ENCODE measurements at regions of chr16 and their contacts with region 1.

Region 1: GRCh38 chr16:24737391-24737871 is 8.0 kb downstream of the TNRC6A start:
- DNase-seq: no peak
- H3K4me3 ChIP-seq: peak overlapping the region; percentile 11; the same call in 1 of the 2 replicates
- H3K27ac ChIP-seq: no peak overlapping the region
- H3K27me3 ChIP-seq: no peaks in the 10 kb centered on the region
- CTCF ChIP-seq: no peak

Region 2: DNA sequence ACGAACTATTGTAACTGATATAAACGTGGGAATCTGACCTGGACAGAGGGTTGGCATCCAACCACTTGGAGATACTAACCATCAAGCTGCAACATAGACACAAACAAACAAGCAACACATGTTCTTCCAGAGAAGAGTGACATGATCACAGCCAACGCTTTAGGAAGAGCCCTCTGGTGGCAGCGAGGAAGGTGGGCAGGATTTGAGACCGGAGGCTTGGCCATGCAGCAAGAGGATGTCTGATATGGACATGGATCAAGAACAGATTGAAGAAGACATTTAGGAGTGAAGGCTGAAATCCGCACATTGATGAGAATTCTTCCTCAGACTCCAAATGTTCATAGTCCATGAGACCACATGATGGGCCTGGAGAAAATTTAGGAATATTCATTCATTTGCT is 48.3 kb before region 1 on chr16:
- CTCF ChIA-PET with region 1: interaction called, 10 read pairs
- POLR2A ChIA-PET with region 1: no interaction called
- DNase-seq: no peak
- H3K4me3 ChIP-seq: no peak overlapping the region
- H3K27ac ChIP-seq: no peak overlapping the region
- H3K27me3 ChIP-seq: no peaks in the 10 kb centered on the region
- CTCF ChIP-seq: peak; percentile 72

Region 3: GRCh38 chr16:24759006-24759405 is 21.6 kb after region 1 on chr16:
- CTCF ChIA-PET with region 1: no interaction called
- POLR2A ChIA-PET with region 1: no interaction called
- DNase-seq: no peak
- H3K4me3 ChIP-seq: no peak overlapping the region
- H3K27ac ChIP-seq: no peak overlapping the region
- H3K27me3 ChIP-seq: no peaks in the 10 kb centered on the region
- CTCF ChIP-seq: no peak

Measured in AG04450 (cell line).